ENCODE measurements at regions of chrX and their contacts with region 1.

Region 1: DNA sequence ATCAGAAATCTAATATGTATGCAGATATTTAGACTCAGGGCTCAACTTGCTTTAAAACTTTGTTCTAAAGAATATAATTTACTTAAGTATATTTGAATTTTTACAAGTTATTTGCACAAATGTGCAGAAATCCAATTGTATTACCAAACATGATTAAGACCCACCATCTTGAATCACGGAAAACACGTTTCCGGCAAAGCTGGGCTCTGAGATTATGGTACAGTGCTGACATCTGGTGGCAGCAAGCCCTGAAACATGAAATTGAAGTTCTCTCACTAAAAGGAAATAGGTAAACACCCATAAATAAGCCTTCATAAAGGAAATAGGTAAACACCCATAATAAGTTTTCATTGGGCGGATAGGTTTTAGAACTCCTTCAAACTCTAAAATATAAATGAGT is 98.3 kb upstream of the MAOA start:
- DNase-seq: peak; percentile 72
- H3K4me3 ChIP-seq: no peak overlapping the region
- H3K27ac ChIP-seq: no peak overlapping the region
- H3K4me1 ChIP-seq: no peaks in the 10 kb centered on the region
- CTCF ChIP-seq: peak; percentile 80

Region 2: GRCh38 chrX:41781502-41781901 is 1776.3 kb before region 1 on chrX:
- CTCF ChIA-PET with region 1: no interaction called
- POLR2A ChIA-PET with region 1: no interaction called
- intact Hi-C with region 1: loop called (anchors 5 kb)
- DNase-seq: peak; percentile 59
- H3K4me3 ChIP-seq: no peak overlapping the region
- H3K27ac ChIP-seq: no peak overlapping the region
- H3K4me1 ChIP-seq: no peaks in the 10 kb centered on the region
- CTCF ChIP-seq: peak; percentile 81

Region 3: DNA sequence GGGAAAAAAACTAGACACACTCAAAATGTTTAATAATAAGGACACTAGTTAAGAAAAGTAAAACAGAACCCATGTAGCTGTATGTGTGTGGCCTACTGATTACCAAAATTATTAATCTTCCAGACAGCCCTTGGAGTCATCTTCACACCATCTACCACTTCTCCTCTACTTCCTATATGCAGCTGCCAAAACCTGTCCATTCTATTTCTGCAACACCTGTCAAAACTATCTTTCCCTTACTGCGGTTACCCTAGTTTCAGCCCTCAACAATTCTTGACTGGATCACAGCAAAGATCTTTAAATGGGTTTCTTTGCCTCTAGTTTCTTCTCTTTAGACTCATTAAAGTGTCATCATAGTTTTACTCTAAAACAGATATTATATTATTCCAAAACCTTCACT is 1761.2 kb before region 1 on chrX:
- CTCF ChIA-PET with region 1: no interaction called
- POLR2A ChIA-PET with region 1: no interaction called
- intact Hi-C with region 1: loop called (anchors 5 kb)
- DNase-seq: no peak
- H3K4me3 ChIP-seq: no peak overlapping the region
- H3K27ac ChIP-seq: no peak overlapping the region
- H3K4me1 ChIP-seq: peaks cover 10% of the 10 kb centered on the region
- CTCF ChIP-seq: no peak

Region 4: GRCh38 chrX:43349363-43349762 is 208.4 kb before region 1 on chrX:
- CTCF ChIA-PET with region 1: no interaction called
- POLR2A ChIA-PET with region 1: no interaction called
- intact Hi-C with region 1: loop called (anchors 5 kb)
- DNase-seq: peak; percentile 51
- H3K4me3 ChIP-seq: no peak overlapping the region
- H3K27ac ChIP-seq: no peak overlapping the region
- H3K4me1 ChIP-seq: peaks cover 6% of the 10 kb centered on the region
- CTCF ChIP-seq: peak; percentile 72

Region 5: GRCh38 chrX:43423876-43424275 is 133.9 kb before region 1 on chrX:
- CTCF ChIA-PET with region 1: no interaction called
- POLR2A ChIA-PET with region 1: no interaction called
- intact Hi-C with region 1: no loop called
- DNase-seq: no peak
- H3K4me3 ChIP-seq: no peak overlapping the region
- H3K27ac ChIP-seq: no peak overlapping the region
- H3K4me1 ChIP-seq: no peaks in the 10 kb centered on the region
- CTCF ChIP-seq: no peak

Region 6: GRCh38 chrX:43750248-43750676 is 192.5 kb after region 1 on chrX:
- CTCF ChIA-PET with region 1: no interaction called
- POLR2A ChIA-PET with region 1: no interaction called
- intact Hi-C with region 1: loop called (anchors 1 kb)
- DNase-seq: peak; percentile 61
- H3K4me3 ChIP-seq: no peak overlapping the region
- H3K27ac ChIP-seq: no peak overlapping the region
- H3K4me1 ChIP-seq: no peaks in the 10 kb centered on the region
- CTCF ChIP-seq: peak; percentile 73

Region 7: GRCh38 chrX:43870758-43871419 is 313.1 kb after region 1 on chrX:
- CTCF ChIA-PET with region 1: no interaction called
- POLR2A ChIA-PET with region 1: no interaction called
- intact Hi-C with region 1: no loop called
- DNase-seq: no peak
- H3K4me3 ChIP-seq: no peak overlapping the region
- H3K27ac ChIP-seq: no peak overlapping the region
- H3K4me1 ChIP-seq: no peaks in the 10 kb centered on the region
- CTCF ChIP-seq: no peak